ENCODE measurements at regions of chr1 and their contacts with region 1.

Region 1: GRCh38 chr1:45011837-45012638 is at the start of gene UROD:
- DNase-seq: peak; percentile 90 to 98
- H3K4me3 ChIP-seq: peak within 1 kb of the TSS; percentile 92 to 100 (median 98)
- H3K27ac ChIP-seq: peak within 1 kb of the TSS; percentile 84 to 89 (median 87)
- H3K4me1 ChIP-seq: peaks cover 30 to 58% (median 54%) of the 10 kb centered on the region in 4 donors
- H3K27me3 ChIP-seq: no peaks in the 10 kb centered on the region
- CTCF ChIP-seq: peak in 1 of 7 experiments; percentile 21
- EP300 ChIP-seq: no peak
- POLR2A ChIP-seq: no peak
- total RNA-seq, gene UROD: 13.4 to 132 (median 41.6) TPM

Region 2: DNA sequence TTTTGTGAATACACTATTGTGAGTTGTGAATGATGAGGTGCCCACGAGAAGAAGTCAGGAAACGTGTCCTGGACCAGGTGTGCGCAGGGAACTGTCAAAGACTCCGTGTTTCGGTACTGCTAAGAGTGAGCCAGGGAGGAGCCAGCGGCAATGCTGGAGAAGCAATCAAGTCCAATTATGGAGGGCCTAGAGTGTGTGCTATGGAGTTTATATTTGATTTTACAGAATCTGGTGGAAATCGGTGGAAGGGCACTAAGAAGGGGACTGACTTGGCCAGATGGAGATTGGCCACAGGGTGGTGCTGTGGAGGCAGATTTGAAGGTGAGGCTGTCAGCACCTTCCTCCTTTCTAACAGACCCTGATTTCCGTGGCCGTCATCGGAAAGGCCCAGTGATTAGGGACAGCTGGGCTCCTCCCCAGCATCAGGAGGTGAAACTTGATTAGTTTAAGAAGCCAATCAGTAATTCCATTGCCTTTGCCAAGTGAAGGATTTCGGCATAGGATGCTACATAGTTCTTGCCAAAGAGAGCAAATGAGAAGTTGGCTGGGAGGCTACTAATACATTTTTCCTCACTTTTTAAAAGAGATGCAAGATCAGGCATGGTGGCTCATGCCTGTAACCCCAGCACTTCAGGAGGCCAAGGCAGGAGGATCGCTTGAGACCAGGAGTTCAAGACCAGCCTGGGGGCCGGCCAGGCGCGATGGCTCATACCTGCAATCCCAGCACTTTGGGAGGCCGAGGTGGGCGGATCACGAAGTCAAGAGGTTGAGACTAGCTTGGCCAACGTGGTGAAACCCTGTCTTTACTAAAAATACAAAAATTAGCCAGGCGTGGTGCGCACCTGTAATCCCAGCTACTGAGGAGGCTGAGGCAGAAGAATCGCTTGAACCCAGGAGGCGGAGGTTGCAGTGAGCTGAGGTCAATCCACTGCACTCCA is 176.0 kb before region 1 on chr1:
- intact Hi-C with region 1: loop called (anchors 10 kb)
- DNase-seq: peak; percentile 88 to 94
- H3K4me3 ChIP-seq: no peak overlapping the region
- H3K27ac ChIP-seq: no peak overlapping the region
- H3K4me1 ChIP-seq: peaks cover 0 to 5% (median 0%) of the 10 kb centered on the region in 4 donors
- H3K27me3 ChIP-seq: no peaks in the 10 kb centered on the region
- CTCF ChIP-seq: peak in 5 of 7 experiments; percentile 56 to 85 (median 76)
- EP300 ChIP-seq: no peak
- POLR2A ChIP-seq: no peak

Region 3: DNA sequence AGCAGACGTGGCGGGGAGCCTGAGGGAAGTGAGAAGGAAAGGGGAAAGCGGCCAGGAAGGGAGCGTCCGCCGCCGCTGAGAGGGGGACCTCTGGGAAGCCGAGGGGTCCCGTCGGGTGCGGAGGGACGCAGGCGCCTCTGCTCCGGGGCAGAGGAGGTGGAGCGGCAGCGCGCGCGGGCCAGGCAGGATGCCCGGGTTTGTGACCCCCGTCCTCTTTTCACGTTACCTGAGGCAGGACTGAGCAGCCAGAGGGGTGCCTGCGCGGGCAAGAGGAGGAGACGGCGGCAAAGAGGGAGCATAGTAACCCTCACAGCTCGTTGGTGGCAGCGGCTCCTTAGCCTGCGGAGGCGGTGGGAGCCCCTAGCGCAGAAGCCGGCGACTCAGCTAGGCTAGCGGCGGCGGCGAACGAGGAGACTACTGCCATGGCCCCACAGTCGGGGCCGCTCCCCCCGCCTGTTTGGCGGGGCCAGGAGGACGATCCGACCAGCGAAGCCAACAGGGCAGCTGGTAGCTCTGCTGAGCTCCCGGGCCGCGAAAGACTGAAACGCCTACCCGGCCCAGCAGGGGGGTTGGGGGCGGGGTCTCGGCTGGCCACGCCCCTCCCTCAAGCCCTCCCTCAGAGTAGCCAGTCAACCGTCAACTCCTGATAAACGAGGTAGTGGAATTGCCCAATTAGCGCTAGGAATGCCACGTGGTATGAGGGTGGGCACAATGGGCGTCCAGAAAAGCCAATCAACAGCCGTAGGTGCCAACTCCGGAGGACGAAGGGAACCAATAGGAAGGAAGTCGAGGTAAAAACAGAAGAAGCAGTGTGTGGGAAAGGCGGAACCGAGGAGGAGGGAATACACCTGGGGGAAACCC is 478.8 kb after region 1 on chr1 and contains the start of gene TESK2:
- intact Hi-C with region 1: loop called (anchors 10 kb)
- DNase-seq: peak; percentile 98 to 100
- H3K4me3 ChIP-seq: peak within 1 kb of the TSS; percentile 76 to 95 (median 88)
- H3K27ac ChIP-seq: peak within 1 kb of the TSS; percentile 81 to 88 (median 83)
- H3K4me1 ChIP-seq: peaks cover 0 to 28% (median 13%) of the 10 kb centered on the region in 4 donors
- H3K27me3 ChIP-seq: no peaks in the 10 kb centered on the region
- CTCF ChIP-seq: peak in 3 of 7 experiments; percentile 3 to 51 (median 27)
- EP300 ChIP-seq: no peak
- POLR2A ChIP-seq: peak in 2 of 4 donors; percentile 60 to 65
- total RNA-seq, gene TESK2: 2.8 to 11.2 (median 7.4) TPM in 4 of 5 donors, not detected in the other